Endothelial cell of umbilical vein (primary cell): ENCODE measurements at regions of chr11 and their contacts with region 1.

Region 1: DNA sequence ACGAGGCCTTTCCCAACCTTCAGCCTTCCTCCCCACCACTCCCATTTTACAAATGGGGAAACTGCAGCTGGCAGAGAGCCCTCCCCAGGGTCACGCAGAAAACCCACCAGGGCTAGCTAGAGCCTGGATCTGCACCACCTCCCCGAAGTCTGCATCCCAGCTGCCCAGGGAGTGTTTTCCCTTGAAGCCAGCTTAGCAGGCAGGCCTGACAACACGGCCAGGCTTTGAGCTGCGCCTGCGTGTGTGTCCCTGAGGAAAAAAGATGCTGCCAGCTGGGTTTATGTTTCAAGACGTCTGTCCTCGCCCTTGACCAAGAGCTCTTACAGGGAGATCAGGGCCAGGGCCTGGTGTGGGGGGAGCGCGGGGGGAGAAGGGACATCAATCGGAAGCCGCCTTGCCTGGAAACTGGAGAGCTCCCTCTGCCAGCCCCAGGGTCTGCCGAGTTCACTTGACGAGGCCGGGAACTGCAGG is 20.3 kb downstream of the WNT11 start:
- DNase-seq: no peak
- H3K4me3 ChIP-seq: no peak overlapping the region
- H3K27ac ChIP-seq: no peak overlapping the region
- H3K4me1 ChIP-seq: no peaks in the 10 kb centered on the region
- H3K27me3 ChIP-seq: no peaks in the 10 kb centered on the region
- CTCF ChIP-seq: no peak
- POLR2A ChIP-seq: no peak

Region 2: GRCh38 chr11:75802913-75803820 is 382.8 kb before region 1 on chr11:
- CTCF ChIA-PET with region 1: no interaction called
- POLR2A ChIA-PET with region 1: no interaction called
- dilution Hi-C with region 1: no loop called
- intact Hi-C with region 1: no loop called
- DNase-seq: peak; percentile 84
- H3K4me3 ChIP-seq: no peak overlapping the region
- H3K27ac ChIP-seq: no peak overlapping the region
- H3K4me1 ChIP-seq: no peaks in the 10 kb centered on the region
- H3K27me3 ChIP-seq: no peaks in the 10 kb centered on the region
- CTCF ChIP-seq: peak; percentile 87 to 90
- POLR2A ChIP-seq: no peak

Region 3: DNA sequence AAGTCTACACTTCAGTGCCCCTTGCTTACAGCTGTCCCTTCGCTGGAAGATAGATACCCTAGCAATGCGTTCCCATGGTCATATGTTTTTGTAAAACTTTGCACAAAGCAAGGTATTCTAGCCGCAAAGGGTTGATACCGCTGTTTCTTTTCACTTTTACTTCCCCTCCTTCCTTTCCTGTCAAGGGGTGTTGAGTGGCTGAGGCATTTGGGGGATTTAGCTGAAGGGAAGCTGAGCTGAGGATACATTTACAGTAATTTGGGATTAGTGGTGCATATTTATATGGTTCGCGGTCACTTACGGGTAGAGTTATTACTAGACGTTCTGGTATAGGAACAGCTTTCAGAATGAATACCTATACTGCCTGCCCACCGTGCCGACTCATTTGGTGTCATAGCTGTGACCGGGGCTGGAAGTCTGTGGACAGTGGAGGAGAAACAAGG is 107.2 kb after region 1 on chr11:
- CTCF ChIA-PET with region 1: no interaction called
- POLR2A ChIA-PET with region 1: interaction called, 12 read pairs
- dilution Hi-C with region 1: no loop called
- intact Hi-C with region 1: no loop called
- DNase-seq: no peak
- H3K4me3 ChIP-seq: no peak overlapping the region
- H3K27ac ChIP-seq: no peak overlapping the region
- H3K4me1 ChIP-seq: peaks cover under 1% of the 10 kb centered on the region
- H3K27me3 ChIP-seq: no peaks in the 10 kb centered on the region
- CTCF ChIP-seq: no peak
- POLR2A ChIP-seq: no peak